ENCODE measurements at regions of chr1 and their contacts with region 1.

Region 1: DNA sequence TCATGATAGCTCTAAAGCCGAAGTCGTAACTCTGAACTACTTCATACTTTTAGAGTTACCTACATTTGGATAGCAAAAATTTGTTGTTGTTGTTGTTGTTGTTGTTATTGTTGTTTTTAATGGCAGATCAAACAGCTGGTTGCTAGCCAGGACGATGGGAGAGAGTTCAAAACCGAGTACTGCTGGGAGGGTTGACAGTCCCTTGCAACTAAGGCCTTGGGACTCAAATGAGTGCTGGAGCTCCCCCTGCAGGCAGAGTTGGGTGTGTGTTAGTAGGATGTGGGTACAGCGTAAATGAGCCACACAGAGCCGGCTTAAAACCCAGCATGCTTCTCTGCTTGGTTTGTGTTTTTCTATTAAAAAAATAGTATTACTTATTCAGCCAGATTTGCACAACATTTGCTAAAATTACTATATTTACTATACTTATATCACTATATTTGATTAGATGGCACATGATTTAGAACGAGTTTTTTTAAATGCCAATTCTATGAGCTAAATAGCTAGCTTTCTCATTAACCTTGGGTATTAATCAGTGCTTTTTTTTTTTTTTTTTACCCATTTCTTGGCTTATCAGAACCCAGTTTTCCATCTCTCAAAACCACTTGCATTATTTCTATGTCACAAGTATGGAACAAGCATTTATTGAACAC is 129.2 kb upstream of the SYT6 start:
- DNase-seq: peak; percentile 65 to 83
- ATAC-seq: peak; percentile 99
- H3K4me3 ChIP-seq: no peak overlapping the region
- H3K27ac ChIP-seq: no peak overlapping the region
- H3K4me1 ChIP-seq: no peaks in the 10 kb centered on the region
- CTCF ChIP-seq: peak; percentile 71
- EP300 ChIP-seq: no peak
- POLR2A ChIP-seq: no peak
- RAD21 ChIP-seq: peak; percentile 69 to 78

Region 2: GRCh38 chr1:113978863-113979702 is 303.8 kb before region 1 on chr1 and contains the start of gene OLFML3:
- CTCF ChIA-PET with region 1: interaction called, 54 read pairs
- POLR2A ChIA-PET with region 1: no interaction called
- DNase-seq: peak; percentile 37 to 76
- ATAC-seq: peak; percentile 74 to 86; a peak in 5 of 6 replicates
- H3K4me3 ChIP-seq: no peak within 1 kb of the TSS
- H3K27ac ChIP-seq: peak within 1 kb of the TSS; percentile 50 to 77; a peak in 4 of 6 replicates
- H3K4me1 ChIP-seq: peaks cover 18% of the 10 kb centered on the region
- CTCF ChIP-seq: peak; percentile 65
- EP300 ChIP-seq: no peak
- POLR2A ChIP-seq: no peak
- RAD21 ChIP-seq: peak; percentile 77
- polyA plus RNA-seq, gene OLFML3: 1.2 TPM in 2 replicates

Region 3: DNA sequence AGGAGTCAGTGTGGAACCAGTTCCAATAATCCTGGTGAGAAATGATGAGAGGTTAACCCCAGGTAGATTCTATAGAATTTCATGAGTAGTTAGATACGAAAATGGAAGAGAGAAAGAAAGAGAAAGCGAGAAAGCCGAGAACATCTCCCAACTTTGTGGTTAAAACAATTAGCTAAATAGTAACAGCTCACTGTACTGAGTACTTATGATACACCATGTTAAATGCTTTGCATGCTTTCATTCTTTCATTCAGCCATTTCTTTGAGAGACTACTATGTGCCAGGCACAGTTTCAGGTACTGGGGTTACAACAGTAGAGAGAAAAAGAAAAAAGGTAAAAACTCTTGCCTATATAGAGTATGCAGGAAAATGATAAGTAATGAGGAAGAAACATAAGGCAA is 19.5 kb before region 1 on chr1:
- CTCF ChIA-PET with region 1: interaction called, 24 read pairs
- POLR2A ChIA-PET with region 1: no interaction called
- DNase-seq: no peak
- ATAC-seq: no peak
- H3K4me3 ChIP-seq: no peak overlapping the region
- H3K27ac ChIP-seq: no peak overlapping the region
- H3K4me1 ChIP-seq: no peaks in the 10 kb centered on the region
- CTCF ChIP-seq: no peak
- EP300 ChIP-seq: no peak
- POLR2A ChIP-seq: no peak
- RAD21 ChIP-seq: no peak

Region 4: DNA sequence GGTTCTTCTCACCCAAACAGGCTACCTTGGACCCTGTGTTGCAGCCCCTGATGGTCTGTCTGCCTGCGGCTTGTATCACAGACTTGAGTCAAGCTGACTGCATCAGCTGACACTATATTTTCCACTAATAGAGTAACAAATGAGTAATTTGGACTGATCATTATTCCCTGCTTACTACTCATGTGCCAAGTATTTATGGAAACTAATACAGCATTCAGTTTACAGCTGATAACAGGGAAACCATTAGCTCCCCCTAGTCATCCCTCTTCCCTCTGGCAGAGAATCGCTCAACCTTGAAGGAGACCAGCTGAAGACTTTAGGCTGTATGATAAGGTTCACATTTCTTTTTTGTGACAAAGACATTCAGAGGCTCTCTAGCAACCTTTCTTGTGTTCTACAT is 12.6 kb before region 1 on chr1:
- CTCF ChIA-PET with region 1: interaction called, 24 read pairs
- POLR2A ChIA-PET with region 1: no interaction called
- DNase-seq: no peak
- ATAC-seq: no peak
- H3K4me3 ChIP-seq: no peak overlapping the region
- H3K27ac ChIP-seq: no peak overlapping the region
- H3K4me1 ChIP-seq: no peaks in the 10 kb centered on the region
- CTCF ChIP-seq: no peak
- EP300 ChIP-seq: no peak
- POLR2A ChIP-seq: no peak
- RAD21 ChIP-seq: no peak

Region 5: DNA sequence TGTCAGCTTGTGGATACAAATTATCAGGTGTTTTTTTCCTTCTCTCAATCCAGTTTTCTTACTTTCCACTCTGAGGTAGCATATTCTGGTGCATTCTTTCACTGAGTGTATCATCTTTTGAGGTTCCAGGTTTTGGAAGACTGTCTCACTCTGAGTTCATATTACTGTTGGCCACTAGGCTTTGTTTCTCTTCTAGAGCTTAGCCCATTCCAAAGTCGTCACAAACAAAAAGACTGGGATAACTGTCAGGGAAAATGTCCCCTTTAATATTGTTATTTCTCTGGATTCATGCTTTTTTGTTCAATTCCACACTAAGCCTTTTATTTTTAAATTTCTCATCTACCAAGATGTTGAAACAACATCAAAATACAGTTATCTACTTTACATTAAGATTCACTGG is 106.8 kb after region 1 on chr1:
- CTCF ChIA-PET with region 1: no interaction called
- POLR2A ChIA-PET with region 1: no interaction called
- DNase-seq: no peak
- ATAC-seq: no peak
- H3K4me3 ChIP-seq: no peak overlapping the region
- H3K27ac ChIP-seq: no peak overlapping the region
- H3K4me1 ChIP-seq: no peaks in the 10 kb centered on the region
- CTCF ChIP-seq: no peak
- EP300 ChIP-seq: no peak
- POLR2A ChIP-seq: no peak
- RAD21 ChIP-seq: no peak